Common myeloid progenitor, CD34-positive (primary cell): ENCODE measurements at regions of chr14 and their contacts with region 1.

Region 1: DNA sequence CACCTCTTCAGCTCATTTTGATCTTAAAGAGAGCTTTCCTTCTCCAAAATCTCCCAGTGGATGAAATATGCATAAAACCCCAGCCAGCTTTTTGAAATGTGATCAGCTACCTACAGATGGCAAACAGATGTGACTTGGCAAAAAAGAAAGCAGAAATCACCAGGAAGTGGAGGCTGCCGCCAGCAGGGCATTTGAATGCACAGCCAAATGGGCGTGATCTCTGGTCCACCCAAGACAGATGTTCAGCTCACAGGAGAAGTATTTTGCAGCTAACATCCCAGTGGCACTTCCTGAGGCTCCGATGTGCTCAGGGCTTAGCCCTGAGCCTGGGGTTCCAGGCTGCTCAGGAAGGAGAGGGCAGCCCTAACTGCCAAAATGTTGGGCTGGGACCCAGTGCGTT is 78.3 kb downstream of the LGMN start:
- DNase-seq: peak; percentile 74 to 94 (median 92)
- H3K4me3 ChIP-seq: peak overlapping the region in 3 of 7 experiments; percentile 1 to 31 (median 11)
- H3K27ac ChIP-seq: peak overlapping the region; percentile 26 to 73
- H3K4me1 ChIP-seq: peaks cover 7 to 81% (median 75%) of the 10 kb centered on the region in 4 experiments
- H3K27me3 ChIP-seq: no peaks in the 10 kb centered on the region

Region 2: DNA sequence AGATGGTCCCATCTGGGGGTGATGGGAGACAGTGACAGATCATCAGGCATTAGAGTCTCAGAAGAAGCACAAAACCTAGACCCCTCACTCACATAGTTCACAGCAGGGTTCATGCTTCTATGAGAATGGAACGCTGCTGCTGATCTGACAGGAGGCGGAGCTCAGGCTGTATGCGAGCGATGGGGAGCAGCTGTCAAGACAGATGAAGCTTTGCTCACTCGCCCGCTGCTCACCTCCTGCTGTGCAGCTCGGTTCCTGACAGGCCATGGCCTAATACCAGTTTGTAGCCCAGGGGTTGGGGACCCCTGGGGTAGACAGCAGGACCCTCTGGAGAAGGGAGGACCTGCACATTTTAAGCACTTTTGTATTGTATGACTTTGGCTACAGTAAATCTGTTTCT is 32.9 kb before region 1 on chr14:
- CTCF ChIA-PET with region 1: no interaction called
- POLR2A ChIA-PET with region 1: no interaction called
- DNase-seq: no peak
- H3K4me3 ChIP-seq: no peak overlapping the region
- H3K27ac ChIP-seq: no peak overlapping the region
- H3K4me1 ChIP-seq: peaks cover 0 to 17% (median 11%) of the 10 kb centered on the region in 4 experiments
- H3K27me3 ChIP-seq: no peaks in the 10 kb centered on the region

Region 3: GRCh38 chr14:92651106-92651757 is 18.9 kb before region 1 on chr14:
- CTCF ChIA-PET with region 1: interaction called, 28 read pairs
- POLR2A ChIA-PET with region 1: interaction called, 27 read pairs
- DNase-seq: peak; percentile 90 to 98 (median 97)
- H3K4me3 ChIP-seq: peak overlapping the region in 6 of 7 experiments; percentile 29 to 98 (median 58)
- H3K27ac ChIP-seq: peak overlapping the region; percentile 92 to 93
- H3K4me1 ChIP-seq: peaks cover 34 to 92% (median 87%) of the 10 kb centered on the region in 4 experiments
- H3K27me3 ChIP-seq: no peaks in the 10 kb centered on the region

Region 4: DNA sequence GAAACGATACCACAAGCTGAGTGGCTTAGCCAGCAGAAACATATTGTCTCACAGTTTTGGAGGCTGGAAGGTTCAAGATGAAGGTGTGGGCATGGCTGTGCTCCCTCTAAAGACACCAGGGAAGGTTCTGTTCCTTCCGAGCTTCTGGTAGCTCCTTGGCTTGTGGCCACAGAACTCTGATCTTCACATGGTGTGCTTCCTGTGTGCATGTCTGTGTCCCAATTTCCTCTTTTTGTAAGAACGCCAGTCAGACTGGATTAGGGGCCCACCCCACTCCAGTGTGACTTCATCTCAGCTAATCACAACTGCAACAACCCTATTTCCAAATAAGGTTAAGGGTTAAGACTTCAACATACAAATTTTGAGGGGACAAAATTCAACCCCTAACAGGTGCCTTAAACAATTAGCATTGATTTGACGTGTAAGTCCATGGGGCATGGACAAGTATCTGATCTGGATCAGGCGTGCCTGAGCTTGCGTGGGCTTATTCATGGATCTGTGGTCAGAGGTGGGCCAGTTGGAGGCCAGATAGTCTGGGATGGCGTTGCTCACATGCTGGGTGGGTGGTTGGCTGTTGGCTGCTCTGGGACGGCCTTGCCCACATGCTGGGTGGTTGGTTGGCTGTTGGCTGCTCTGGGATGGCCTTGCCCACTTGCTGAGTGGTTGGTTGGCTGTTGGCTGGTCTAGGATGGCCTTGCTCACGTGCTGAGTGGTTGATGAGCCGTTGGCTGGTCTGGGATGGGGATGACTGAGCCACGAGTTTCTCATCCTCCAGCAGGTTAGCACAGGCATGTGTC is 10.2 kb before region 1 on chr14:
- CTCF ChIA-PET with region 1: interaction called, 25 read pairs
- POLR2A ChIA-PET with region 1: interaction called, 4 read pairs
- DNase-seq: peak; percentile 82 to 94 (median 91)
- H3K4me3 ChIP-seq: peak overlapping the region in 3 of 7 experiments; percentile 25 to 43 (median 30)
- H3K27ac ChIP-seq: peak overlapping the region; percentile 48 to 77
- H3K4me1 ChIP-seq: peaks cover 34 to 91% (median 85%) of the 10 kb centered on the region in 4 experiments
- H3K27me3 ChIP-seq: no peaks in the 10 kb centered on the region

Region 5: DNA sequence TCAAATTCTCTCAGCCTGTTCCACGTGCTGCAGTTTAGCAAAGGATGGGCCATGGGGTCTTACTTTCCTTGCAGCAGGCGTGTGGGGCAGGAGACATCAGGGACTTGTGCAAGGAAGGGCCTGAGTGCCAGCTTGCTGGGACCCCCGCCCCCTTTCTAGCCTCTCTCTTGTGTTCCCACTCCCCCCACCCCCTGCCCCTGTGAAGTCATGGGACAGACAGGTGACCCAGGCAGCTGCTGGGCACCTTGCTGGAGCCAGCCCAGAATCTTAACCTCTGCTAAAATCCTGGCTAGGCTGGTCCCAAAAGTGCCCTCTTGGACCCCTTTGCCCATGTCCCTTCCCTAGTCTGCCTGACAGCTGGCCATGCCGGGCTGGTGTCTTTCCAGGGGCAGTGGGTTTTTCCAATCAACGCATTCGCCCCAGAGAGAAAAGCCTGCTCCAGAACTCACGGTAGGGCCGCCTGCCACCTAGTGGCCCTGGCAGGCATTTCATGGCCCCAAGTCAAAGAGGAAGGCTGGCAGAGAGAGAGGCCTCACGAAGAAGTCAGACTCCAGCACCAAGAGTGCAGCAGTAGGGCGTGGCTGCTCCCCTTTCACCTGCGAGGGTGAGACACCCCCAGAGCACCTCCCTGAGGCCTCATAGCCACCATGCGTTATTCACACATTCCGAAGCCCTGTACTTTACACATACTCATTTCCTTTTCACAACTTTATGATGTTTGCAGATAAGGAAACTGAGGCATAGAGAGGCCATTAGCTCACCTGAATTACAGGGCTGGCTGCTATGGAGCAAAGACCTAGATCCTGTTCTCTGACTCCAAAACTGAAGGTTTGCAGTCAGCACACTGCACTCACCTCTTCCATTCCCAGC is 10.9 kb after region 1 on chr14:
- CTCF ChIA-PET with region 1: interaction called, 44 read pairs
- POLR2A ChIA-PET with region 1: interaction called, 4 read pairs
- DNase-seq: peak; percentile 75 to 86 (median 81)
- H3K4me3 ChIP-seq: no peak overlapping the region
- H3K27ac ChIP-seq: no peak overlapping the region
- H3K4me1 ChIP-seq: peaks cover 0 to 22% (median 19%) of the 10 kb centered on the region in 4 experiments
- H3K27me3 ChIP-seq: no peaks in the 10 kb centered on the region

Region 6: GRCh38 chr14:92759300-92759678 is 89.1 kb after region 1 on chr14:
- CTCF ChIA-PET with region 1: no interaction called
- POLR2A ChIA-PET with region 1: no interaction called
- DNase-seq: peak in 2 of 3 donors; percentile 36 to 49
- H3K4me3 ChIP-seq: no peak overlapping the region
- H3K27ac ChIP-seq: no peak overlapping the region
- H3K4me1 ChIP-seq: peaks cover 0 to 11% (median 0%) of the 10 kb centered on the region in 4 experiments
- H3K27me3 ChIP-seq: no peaks in the 10 kb centered on the region